ENCODE measurements at regions of chr1 and their contacts with region 1.

Region 1: GRCh38 chr1:156689035-156689952 is 12.1 kb upstream of the NES start:
- DNase-seq: peak; percentile 78
- ATAC-seq: peak; percentile 88
- H3K4me3 ChIP-seq: peak overlapping the region; percentile 39 to 63
- H3K27ac ChIP-seq: peak overlapping the region; percentile 95
- H3K4me1 ChIP-seq: peaks cover 50% of the 10 kb centered on the region
- H3K27me3 ChIP-seq: no peaks in the 10 kb centered on the region
- CTCF ChIP-seq: peak; percentile 93

Region 2: GRCh38 chr1:156445789-156446263 is 243.5 kb before region 1 on chr1:
- CTCF ChIA-PET with region 1: no interaction called
- POLR2A ChIA-PET with region 1: no interaction called
- in situ Hi-C with region 1: no loop called
- intact Hi-C with region 1: no loop called
- DNase-seq: peak; percentile 67
- ATAC-seq: peak; percentile 94
- H3K4me3 ChIP-seq: no peak overlapping the region
- H3K27ac ChIP-seq: no peak overlapping the region
- H3K4me1 ChIP-seq: no peaks in the 10 kb centered on the region
- H3K27me3 ChIP-seq: peaks cover 10% of the 10 kb centered on the region
- CTCF ChIP-seq: peak; percentile 96

Region 3: GRCh38 chr1:156659994-156660751 is 29.1 kb before region 1 on chr1:
- CTCF ChIA-PET with region 1: interaction called, 14 read pairs
- POLR2A ChIA-PET with region 1: no interaction called
- in situ Hi-C with region 1: no loop called
- intact Hi-C with region 1: no loop called
- DNase-seq: peak; percentile 95
- ATAC-seq: peak; percentile 79
- H3K4me3 ChIP-seq: peak overlapping the region; percentile 23 to 69
- H3K27ac ChIP-seq: peak overlapping the region; percentile 98
- H3K4me1 ChIP-seq: peaks cover 61% of the 10 kb centered on the region
- H3K27me3 ChIP-seq: no peaks in the 10 kb centered on the region
- CTCF ChIP-seq: peak; percentile 100

Region 4: GRCh38 chr1:156705918-156706656 is 16.8 kb after region 1 on chr1:
- CTCF ChIA-PET with region 1: interaction called, 96 read pairs
- POLR2A ChIA-PET with region 1: interaction called, 10 read pairs
- in situ Hi-C with region 1: no loop called
- intact Hi-C with region 1: loop called (anchors 2 kb)
- DNase-seq: no peak
- ATAC-seq: peak; percentile 64
- H3K4me3 ChIP-seq: peak overlapping the region; percentile 82 to 84
- H3K27ac ChIP-seq: peak overlapping the region; percentile 93
- H3K4me1 ChIP-seq: peaks cover 70% of the 10 kb centered on the region
- H3K27me3 ChIP-seq: no peaks in the 10 kb centered on the region
- CTCF ChIP-seq: peak; percentile 92

Region 5: GRCh38 chr1:156717275-156717805 is 28.0 kb after region 1 on chr1:
- CTCF ChIA-PET with region 1: interaction called, 29 read pairs
- POLR2A ChIA-PET with region 1: interaction called, 6 read pairs
- in situ Hi-C with region 1: no loop called
- intact Hi-C with region 1: no loop called
- DNase-seq: no peak
- ATAC-seq: no peak
- H3K4me3 ChIP-seq: no peak overlapping the region
- H3K27ac ChIP-seq: no peak overlapping the region
- H3K4me1 ChIP-seq: peaks cover 15% of the 10 kb centered on the region
- H3K27me3 ChIP-seq: no peaks in the 10 kb centered on the region
- CTCF ChIP-seq: no peak

Region 6: DNA sequence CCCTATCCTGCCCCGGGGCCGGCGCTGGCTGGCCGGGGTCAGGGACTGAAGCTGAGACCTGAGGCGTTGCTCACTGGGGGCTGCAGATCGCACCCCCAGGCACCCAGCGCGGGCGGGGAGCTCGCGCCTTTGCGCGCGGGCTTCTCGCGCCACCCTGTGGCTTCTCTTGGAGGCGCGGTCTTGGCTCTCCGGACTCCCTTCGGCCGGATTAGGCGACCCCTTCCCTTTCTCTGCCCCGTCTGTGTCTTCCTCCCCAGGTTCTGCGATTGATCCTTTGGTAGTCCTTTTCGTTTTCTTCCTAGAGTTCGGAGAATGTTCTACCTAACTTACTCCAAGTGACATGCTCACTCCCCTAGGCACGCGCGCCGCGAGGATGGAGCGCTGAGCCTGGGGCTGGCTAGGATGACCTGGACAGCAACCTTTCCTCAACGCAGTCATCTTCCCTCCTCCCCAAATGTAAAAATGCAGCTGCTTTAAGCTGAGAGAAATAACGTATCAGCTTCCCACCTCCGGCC is 170.9 kb after region 1 on chr1:
- CTCF ChIA-PET with region 1: interaction called, 39 read pairs
- POLR2A ChIA-PET with region 1: no interaction called
- in situ Hi-C with region 1: no loop called
- intact Hi-C with region 1: loop called (anchors 10 kb)
- DNase-seq: no peak
- ATAC-seq: peak; percentile 80
- H3K4me3 ChIP-seq: peak overlapping the region; percentile 39 to 65
- H3K27ac ChIP-seq: no peak overlapping the region
- H3K4me1 ChIP-seq: peaks cover 13% of the 10 kb centered on the region
- H3K27me3 ChIP-seq: no peaks in the 10 kb centered on the region; the same call in 1 of the 2 replicates
- CTCF ChIP-seq: peak; percentile 97

Region 7: DNA sequence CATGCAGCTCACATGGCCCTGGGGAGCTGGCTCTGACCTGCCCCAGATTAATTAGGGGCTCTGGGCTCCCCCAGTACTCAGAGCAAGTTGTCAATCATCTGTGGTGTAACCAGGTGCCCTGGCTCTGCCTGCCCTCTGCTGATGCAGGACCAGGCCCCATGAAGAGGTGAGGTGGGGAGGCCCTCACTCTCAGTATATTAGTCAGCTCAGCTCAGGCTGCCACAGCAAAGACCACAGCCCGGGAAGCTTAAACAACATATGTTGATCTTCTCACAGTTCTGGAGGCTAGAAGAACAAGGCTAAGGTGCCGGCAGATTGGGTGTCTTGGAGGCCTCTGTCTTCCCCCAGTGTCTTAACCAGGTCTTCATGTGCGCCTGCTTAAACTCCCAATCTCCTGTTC is 796.5 kb after region 1 on chr1:
- CTCF ChIA-PET with region 1: no interaction called
- POLR2A ChIA-PET with region 1: no interaction called
- in situ Hi-C with region 1: no loop called
- intact Hi-C with region 1: no loop called
- DNase-seq: no peak
- ATAC-seq: no peak
- H3K4me3 ChIP-seq: no peak overlapping the region
- H3K27ac ChIP-seq: no peak overlapping the region
- H3K4me1 ChIP-seq: no peaks in the 10 kb centered on the region
- H3K27me3 ChIP-seq: 0 out of 2 replicates have a peak, but pooled peaks cover 2% of the 10 kb centered on the region
- CTCF ChIP-seq: no peak

Measured in Panc1 (cell line).